Natural killer cell (primary cell): ENCODE measurements at regions of chr7 and their contacts with region 1.

Region 1: DNA sequence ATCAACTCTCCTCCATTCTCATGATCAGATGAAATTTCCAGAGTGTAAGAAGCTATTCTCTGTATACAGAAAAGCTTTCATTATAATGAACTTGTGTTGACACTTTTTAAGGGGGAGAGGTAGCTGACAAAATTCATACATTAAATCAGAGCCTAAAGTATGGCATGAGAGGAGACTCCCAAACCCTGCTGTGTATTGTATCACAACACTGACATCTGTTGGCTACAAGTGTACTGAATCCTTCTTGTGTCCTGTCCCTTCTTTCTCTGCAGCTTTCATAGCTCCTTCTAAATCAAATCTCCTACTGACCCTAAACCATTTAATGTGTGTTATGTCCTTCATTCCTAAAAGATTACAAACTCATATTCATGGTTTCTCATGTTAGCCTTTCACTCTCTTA is 70.9 kb downstream of the GCC1 start:
- DNase-seq: peak in 1 of 2 donors; percentile 72
- ATAC-seq: peak in 1 of 3 donors; percentile 43
- H3K4me3 ChIP-seq: no peak overlapping the region
- H3K4me3 Mint-ChIP-seq: no peak overlapping the region
- H3K27ac ChIP-seq: no peak overlapping the region
- H3K27ac Mint-ChIP-seq: no peak overlapping the region
- H3K4me1 ChIP-seq: no peaks in the 10 kb centered on the region
- H3K4me1 Mint-ChIP-seq: no peaks in the 10 kb centered on the region
- H3K27me3 ChIP-seq: peaks cover 3% of the 10 kb centered on the region
- H3K27me3 Mint-ChIP-seq: peaks cover 26 to 44% of the 10 kb centered on the region in 2 donors
- CTCF ChIP-seq: no peak

Region 2: DNA sequence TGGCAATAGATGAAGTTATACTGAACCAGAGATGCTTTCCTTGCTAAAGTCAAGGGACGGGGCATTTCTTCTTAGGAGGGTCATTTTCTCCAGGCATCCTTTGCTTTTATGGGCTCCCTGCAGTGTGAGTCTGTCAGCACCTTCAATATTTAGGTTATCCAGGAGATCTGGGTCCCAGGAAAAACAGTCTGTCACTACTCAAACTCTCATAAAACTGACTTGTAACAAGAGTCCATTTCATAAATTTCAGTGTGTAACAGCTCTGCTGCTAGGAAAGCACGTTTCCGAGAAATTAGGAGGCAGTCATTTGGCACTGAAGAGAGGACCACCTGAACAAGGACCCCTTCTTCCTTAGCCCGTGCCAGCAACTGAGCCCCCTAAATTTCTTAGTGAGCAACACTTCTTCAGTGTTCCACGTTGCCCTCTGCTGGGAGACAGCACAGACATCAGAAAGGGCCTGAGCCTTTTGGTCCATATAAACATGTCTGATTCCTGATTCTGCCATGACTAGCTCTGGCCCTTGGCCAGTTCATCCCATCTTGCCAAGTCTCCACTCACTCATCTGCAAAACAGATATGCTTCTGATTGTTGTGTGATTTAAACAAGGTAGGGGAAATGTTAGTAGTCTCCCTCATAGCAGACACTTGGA is 63.7 kb after region 1 on chr7:
- intact Hi-C with region 1: no loop called
- DNase-seq: peak in 1 of 2 donors; percentile 15
- ATAC-seq: no peak
- H3K4me3 ChIP-seq: no peak overlapping the region
- H3K4me3 Mint-ChIP-seq: no peak overlapping the region
- H3K27ac ChIP-seq: no peak overlapping the region
- H3K27ac Mint-ChIP-seq: no peak overlapping the region
- H3K4me1 ChIP-seq: peaks cover 8% of the 10 kb centered on the region
- H3K4me1 Mint-ChIP-seq: peaks cover 36 to 49% of the 10 kb centered on the region in 2 donors
- H3K27me3 ChIP-seq: no peaks in the 10 kb centered on the region
- H3K27me3 Mint-ChIP-seq: no peaks in the 10 kb centered on the region
- CTCF ChIP-seq: no peak

Region 3: DNA sequence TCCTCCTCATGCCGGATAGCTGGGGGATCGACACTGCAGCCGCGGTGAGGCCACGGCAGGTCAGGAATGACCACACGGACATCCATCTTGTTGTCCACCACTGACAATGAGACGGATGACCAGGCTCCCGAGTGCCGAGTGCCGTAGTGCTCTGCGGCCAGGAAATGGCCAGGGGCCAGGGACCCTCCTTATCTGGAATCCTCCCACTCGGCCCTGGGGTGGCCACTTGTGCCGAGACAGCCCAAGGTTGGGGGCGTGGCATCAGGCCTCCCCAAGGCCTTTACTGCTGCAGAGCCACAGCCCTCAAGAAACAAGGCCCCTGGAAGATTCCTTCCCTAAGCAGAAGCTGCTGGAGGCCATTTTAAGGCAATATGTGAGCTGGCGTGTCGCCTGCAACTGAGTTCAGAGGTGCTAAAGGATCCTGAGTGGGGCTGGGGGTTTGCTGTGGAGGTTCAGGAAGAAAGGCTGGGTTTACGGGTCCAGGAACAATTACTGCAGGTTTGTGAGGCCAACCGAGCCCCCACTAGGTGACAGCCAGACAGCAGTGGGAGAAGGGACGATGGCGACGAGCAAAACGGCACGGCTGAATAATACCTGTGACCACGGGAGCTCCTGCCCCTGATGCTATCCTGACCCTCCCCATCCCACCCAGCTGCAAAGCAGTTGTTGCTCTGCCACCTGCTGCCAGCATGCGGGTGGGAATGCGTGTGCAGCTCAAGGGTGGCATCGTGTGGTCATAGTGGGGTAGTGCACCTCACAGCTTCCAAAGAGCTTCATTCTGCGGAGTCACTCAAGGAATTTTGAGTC is 694.9 kb after region 1 on chr7:
- intact Hi-C with region 1: loop called (anchors 10 kb)
- DNase-seq: peak; percentile 57 to 89
- ATAC-seq: peak; percentile 94 to 100 (median 99)
- H3K4me3 ChIP-seq: no peak overlapping the region
- H3K4me3 Mint-ChIP-seq: no peak overlapping the region
- H3K27ac ChIP-seq: no peak overlapping the region
- H3K27ac Mint-ChIP-seq: no peak overlapping the region
- H3K4me1 ChIP-seq: peaks cover 7% of the 10 kb centered on the region
- H3K4me1 Mint-ChIP-seq: peaks cover 5% of the 10 kb centered on the region in 2 donors
- H3K27me3 ChIP-seq: peaks cover 3% of the 10 kb centered on the region
- H3K27me3 Mint-ChIP-seq: peaks cover 0 to 18% of the 10 kb centered on the region in 2 donors
- CTCF ChIP-seq: peak; percentile 89